Endothelial cell of umbilical vein (primary cell): ENCODE measurements at regions of chr21 and their contacts with region 1.

Region 1: GRCh38 chr21:16330082-16330907 is 600.5 kb downstream of the USP25 start:
- DNase-seq: peak; percentile 87
- H3K4me3 ChIP-seq: no peak overlapping the region
- H3K27ac ChIP-seq: no peak overlapping the region
- H3K4me1 ChIP-seq: no peaks in the 10 kb centered on the region
- H3K27me3 ChIP-seq: no peaks in the 10 kb centered on the region
- CTCF ChIP-seq: peak; percentile 51 to 56
- POLR2A ChIP-seq: no peak

Region 2: DNA sequence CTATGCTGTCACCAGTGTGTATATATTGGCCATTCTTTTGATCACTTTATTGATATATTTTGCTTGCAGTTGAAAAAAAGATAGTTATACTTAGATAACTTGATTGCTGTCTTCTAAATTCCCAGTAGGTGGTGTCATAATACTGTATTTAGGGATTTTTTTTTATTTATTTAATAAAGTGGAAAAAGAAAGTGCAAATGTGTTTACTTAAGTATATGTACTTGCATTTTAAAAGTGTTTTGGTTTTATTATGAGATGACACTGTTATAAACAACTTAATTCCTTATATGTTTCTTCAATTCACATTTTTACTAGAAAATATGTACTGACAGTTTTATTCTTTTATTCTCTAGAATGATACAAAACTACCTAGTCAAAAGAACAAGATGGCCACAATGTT is 435.7 kb before region 1 on chr21:
- CTCF ChIA-PET with region 1: no interaction called
- POLR2A ChIA-PET with region 1: no interaction called
- dilution Hi-C with region 1: no loop called
- intact Hi-C with region 1: loop called (anchors 2 kb)
- DNase-seq: peak; percentile 36
- H3K4me3 ChIP-seq: no peak overlapping the region
- H3K27ac ChIP-seq: no peak overlapping the region
- H3K4me1 ChIP-seq: no peaks in the 10 kb centered on the region
- H3K27me3 ChIP-seq: no peaks in the 10 kb centered on the region
- CTCF ChIP-seq: peak in 1 of 2 donors; percentile 13
- POLR2A ChIP-seq: no peak

Region 3: GRCh38 chr21:16002874-16003466 is 327.3 kb before region 1 on chr21:
- CTCF ChIA-PET with region 1: interaction called, 15 read pairs
- POLR2A ChIA-PET with region 1: no interaction called
- dilution Hi-C with region 1: no loop called
- intact Hi-C with region 1: loop called (anchors 1 kb)
- DNase-seq: peak; percentile 59
- H3K4me3 ChIP-seq: no peak overlapping the region
- H3K27ac ChIP-seq: no peak overlapping the region
- H3K4me1 ChIP-seq: no peaks in the 10 kb centered on the region
- H3K27me3 ChIP-seq: no peaks in the 10 kb centered on the region
- CTCF ChIP-seq: peak; percentile 13
- POLR2A ChIP-seq: no peak

Region 4: DNA sequence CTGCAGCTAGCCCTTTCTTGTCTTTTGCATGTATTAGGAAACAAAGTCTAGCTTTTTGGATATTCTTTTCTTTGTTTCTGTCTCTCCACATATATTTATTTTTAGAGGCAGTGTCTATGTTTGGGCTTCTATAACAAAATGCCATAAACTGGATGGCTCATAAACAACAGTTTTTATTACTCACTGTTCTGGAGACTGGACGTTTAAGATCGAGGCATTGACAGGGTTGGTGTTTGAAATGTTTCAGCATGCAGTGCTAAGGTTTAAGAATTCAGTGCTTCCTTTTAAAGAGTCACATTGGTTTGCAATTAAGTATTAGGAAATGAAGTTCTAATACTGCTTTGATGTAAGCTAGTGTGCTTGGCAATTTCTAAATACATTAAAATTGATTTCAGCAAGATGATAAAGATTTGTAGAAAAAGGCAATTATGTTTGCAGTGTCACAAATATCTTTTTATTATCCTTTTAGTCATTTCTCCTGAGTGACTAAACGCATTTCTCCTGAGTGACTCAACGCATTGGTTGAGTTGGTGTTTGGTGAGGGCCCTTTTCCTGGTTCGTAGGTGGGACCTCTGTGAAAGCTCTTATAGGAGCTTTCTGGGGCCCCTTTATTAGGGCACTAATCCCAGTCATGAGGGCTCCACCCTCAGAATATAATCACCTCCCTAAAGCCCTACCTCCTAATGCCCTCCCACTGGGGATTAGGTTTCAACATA is 283.5 kb before region 1 on chr21:
- CTCF ChIA-PET with region 1: no interaction called
- POLR2A ChIA-PET with region 1: no interaction called
- dilution Hi-C with region 1: no loop called
- intact Hi-C with region 1: no loop called
- DNase-seq: no peak
- H3K4me3 ChIP-seq: no peak overlapping the region
- H3K27ac ChIP-seq: no peak overlapping the region
- H3K4me1 ChIP-seq: no peaks in the 10 kb centered on the region
- H3K27me3 ChIP-seq: no peaks in the 10 kb centered on the region
- CTCF ChIP-seq: no peak
- POLR2A ChIP-seq: no peak

Region 5: DNA sequence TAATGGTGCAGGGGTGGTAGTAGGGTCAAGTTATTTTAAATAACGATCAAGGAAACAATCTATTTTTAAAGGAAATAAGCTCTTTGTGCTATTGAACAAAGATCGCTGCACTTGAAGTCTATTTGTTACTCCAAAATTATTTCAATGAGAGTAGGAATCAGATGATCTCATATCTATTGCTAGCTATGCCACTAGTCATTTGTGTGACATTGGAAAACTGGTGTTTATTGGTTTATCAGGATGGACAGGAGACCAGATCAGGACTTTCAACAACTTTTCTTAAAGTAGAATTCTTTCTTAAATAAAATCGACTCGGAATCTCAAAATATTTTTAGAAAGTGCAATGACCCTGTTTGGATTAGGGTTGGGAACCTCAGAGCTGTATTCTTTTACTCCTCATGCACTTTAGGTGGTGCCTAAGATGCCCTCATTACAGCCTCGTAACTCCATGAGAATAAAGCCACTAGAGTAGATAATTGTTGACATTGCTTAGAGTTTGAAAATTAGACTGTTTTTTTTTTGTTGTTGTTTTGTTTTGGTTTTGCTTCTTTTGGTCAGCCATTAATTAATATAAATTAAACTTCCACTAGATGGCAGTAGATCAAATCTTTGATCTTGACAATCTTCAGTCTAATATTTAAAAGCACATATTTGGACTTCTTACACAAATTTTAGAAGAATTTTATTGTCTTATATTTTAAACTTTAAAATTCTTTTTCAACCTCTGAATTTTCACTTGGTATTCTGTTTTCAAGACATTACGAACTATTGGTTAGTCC is 248.1 kb before region 1 on chr21:
- CTCF ChIA-PET with region 1: interaction called, 98 read pairs
- POLR2A ChIA-PET with region 1: no interaction called
- dilution Hi-C with region 1: no loop called
- intact Hi-C with region 1: loop called (anchors 1 kb)
- DNase-seq: peak; percentile 78
- H3K4me3 ChIP-seq: no peak overlapping the region
- H3K27ac ChIP-seq: peak overlapping the region; percentile 48
- H3K4me1 ChIP-seq: peaks cover 8% of the 10 kb centered on the region
- H3K27me3 ChIP-seq: no peaks in the 10 kb centered on the region
- CTCF ChIP-seq: peak in 1 of 2 donors; percentile 4
- POLR2A ChIP-seq: no peak

Region 6: DNA sequence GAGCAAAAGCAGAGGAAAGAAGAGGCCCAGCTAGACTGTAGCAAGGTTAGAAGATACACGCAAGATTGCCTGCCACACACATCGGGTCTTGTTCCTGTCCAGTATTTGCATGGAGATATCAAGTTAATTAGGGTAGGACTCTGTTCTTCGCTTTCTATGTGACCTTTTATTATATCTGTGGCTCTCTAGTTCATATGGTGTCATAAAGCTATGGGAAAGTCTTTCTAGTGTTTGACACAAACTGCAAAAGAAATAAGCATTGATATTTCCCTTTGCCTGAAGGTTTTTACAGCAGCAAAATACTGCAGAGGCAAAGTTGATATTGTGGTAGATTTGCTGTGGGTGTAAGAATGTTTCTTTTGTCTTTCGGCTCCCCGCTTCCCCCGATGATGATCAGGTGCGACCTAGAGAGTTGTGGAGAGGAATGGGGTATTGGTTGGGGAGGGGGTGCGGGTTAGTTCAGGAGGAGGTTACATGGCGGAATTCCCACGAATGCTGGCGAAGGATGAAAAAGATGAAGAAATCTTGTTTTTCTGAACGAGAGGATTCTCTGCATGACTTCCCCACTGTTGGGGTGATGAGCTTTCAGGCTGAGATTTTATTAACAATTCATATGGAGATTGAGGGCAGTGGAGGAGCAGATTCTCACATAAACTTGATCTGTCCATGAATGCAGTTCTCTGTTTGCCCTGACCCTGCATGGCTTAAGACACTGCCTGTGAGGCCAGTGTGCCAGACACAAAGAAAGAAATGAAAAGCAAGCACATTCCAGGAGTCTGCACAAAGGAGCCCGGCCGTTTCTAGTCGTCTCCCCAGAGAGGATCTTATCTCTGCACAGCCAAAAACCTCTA is 50.3 kb before region 1 on chr21:
- CTCF ChIA-PET with region 1: no interaction called
- POLR2A ChIA-PET with region 1: no interaction called
- dilution Hi-C with region 1: no loop called
- intact Hi-C with region 1: no loop called
- DNase-seq: peak; percentile 70
- H3K4me3 ChIP-seq: peak overlapping the region; percentile 2 to 30 (median 10)
- H3K27ac ChIP-seq: peak overlapping the region; percentile 43
- H3K4me1 ChIP-seq: peaks cover 26% of the 10 kb centered on the region
- H3K27me3 ChIP-seq: no peaks in the 10 kb centered on the region
- CTCF ChIP-seq: no peak
- POLR2A ChIP-seq: no peak

Region 7: DNA sequence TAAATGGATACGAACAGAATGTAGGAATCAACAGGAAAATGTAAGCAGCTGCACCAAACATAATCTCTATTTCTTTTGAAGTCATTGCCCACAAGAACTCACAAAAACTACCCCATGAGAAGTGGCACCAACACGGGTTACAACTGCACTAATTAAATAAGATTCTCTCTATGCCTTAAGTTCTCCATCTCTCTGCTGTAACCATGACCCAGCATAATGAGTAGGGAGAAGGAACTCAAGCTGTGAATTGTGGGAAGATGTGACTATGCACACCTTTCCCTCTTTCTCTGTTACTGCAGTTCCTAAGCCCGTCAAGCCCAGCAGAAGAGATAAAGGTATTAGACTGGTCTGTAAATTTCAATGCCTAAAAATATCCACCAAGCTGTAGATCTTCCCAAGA is 13.5 kb after region 1 on chr21:
- CTCF ChIA-PET with region 1: interaction called, 11 read pairs
- POLR2A ChIA-PET with region 1: no interaction called
- dilution Hi-C with region 1: no loop called
- intact Hi-C with region 1: no loop called
- DNase-seq: no peak
- H3K4me3 ChIP-seq: no peak overlapping the region
- H3K27ac ChIP-seq: no peak overlapping the region
- H3K4me1 ChIP-seq: no peaks in the 10 kb centered on the region
- H3K27me3 ChIP-seq: no peaks in the 10 kb centered on the region
- CTCF ChIP-seq: no peak
- POLR2A ChIP-seq: no peak

Region 8: DNA sequence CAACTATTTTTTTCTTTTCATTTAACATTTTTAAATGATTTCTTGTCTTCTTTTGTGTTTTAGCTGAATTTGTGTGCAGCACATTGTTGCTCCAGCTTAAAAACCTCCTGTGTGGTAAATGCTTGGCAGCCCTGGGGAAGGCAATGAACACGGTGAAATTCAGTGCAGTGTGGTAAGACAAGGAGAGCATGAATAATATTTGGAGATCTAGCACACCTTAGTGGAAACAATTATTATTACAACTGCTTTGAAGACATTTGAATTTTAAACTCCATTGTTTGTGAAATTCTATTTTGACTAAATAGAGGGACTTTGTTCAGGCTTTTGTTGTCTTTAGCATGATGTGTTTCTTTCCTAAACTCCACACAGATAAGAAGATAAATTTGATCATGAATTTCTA is 939.9 kb after region 1 on chr21:
- CTCF ChIA-PET with region 1: interaction called, 3 read pairs
- POLR2A ChIA-PET with region 1: no interaction called
- dilution Hi-C with region 1: no loop called
- intact Hi-C with region 1: loop called (anchors 5 kb)
- DNase-seq: peak; percentile 38
- H3K4me3 ChIP-seq: no peak overlapping the region
- H3K27ac ChIP-seq: no peak overlapping the region
- H3K4me1 ChIP-seq: no peaks in the 10 kb centered on the region
- H3K27me3 ChIP-seq: no peaks in the 10 kb centered on the region
- CTCF ChIP-seq: peak; percentile 13 to 15
- POLR2A ChIP-seq: no peak